Activated B cell treated with CpG ODN at 0.5 μM for 24 hours (primary cell): ENCODE measurements at regions of chr12 and their contacts with region 1.

Region 1: DNA sequence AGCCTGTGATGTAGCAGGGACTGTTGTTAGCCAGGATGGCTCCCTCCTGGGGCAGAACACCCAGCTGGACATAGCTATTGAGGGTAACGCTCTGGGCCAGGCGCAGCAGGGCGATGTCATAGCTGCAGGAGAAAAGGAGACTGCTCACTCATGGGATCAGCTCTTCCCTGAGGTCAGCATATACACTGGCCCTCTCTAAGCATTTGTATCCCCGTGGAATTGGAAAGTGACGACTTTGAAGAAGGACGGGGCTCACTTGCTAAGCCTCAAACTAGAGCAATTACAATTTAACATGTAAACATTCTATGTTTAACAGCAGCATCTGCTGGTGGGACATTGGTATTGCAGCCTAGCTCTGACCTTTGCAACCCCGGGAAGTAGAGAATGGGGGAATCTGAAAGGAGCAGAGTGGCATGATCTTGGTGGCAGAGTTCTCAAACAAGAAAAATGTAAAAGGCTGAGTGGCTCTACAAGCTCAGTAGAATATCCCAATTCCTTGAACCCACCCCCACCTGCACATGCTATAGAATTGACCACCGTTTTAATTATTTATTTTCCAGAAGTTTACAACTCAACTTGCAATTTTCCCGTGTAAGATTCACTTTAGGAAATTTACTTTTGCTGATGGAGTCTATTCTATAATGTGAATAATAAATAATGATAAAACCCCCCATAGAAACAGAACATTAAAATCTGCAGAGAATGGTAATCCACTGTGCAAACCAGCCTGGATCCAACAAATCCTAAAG is 5.0 kb downstream of the CELA1 start:
- DNase-seq: peak; percentile 30
- ATAC-seq: peak; percentile 87
- H3K4me3 Mint-ChIP-seq: peak overlapping the region; percentile 20
- H3K27ac Mint-ChIP-seq: peak overlapping the region; percentile 31
- H3K4me1 Mint-ChIP-seq: peaks cover 48% of the 10 kb centered on the region
- H3K27me3 Mint-ChIP-seq: no peaks in the 10 kb centered on the region
- CTCF ChIP-seq: peak; percentile 73

Region 2: DNA sequence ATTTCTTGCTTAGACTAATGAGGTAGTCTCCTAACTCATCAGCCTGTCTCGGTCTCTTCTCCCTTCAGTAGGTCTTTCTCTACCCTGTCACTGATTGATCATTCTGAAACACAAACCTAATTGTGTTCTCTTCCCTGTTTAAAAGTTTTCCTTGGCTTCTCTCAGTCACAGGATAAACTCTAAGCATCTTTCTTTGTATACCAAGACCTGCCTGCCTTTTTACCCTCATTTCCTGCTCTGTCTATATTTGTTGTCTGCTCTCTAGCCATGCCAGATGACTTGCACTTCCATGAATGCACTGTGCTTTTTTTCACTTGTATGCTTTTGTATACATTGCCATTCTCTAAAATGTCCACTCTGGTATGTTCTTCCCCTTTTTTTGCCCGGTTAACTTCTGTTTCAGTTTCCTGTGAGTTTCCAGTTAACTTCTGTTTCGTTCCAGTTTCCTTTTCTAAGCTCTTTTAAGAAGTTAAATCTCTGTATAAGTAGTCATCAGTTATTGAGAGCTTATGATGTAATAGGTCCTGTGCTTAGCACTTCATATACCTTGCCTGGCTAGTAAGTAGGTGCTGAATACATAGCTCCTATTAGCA is 823.9 kb before region 1 on chr12:
- CTCF ChIA-PET with region 1: no interaction called
- POLR2A ChIA-PET with region 1: no interaction called
- intact Hi-C with region 1: no loop called
- DNase-seq: no peak
- ATAC-seq: peak; percentile 75
- H3K4me3 Mint-ChIP-seq: no peak overlapping the region
- H3K27ac Mint-ChIP-seq: no peak overlapping the region
- H3K4me1 Mint-ChIP-seq: peaks cover 44% of the 10 kb centered on the region
- H3K27me3 Mint-ChIP-seq: no peaks in the 10 kb centered on the region
- CTCF ChIP-seq: no peak

Region 3: DNA sequence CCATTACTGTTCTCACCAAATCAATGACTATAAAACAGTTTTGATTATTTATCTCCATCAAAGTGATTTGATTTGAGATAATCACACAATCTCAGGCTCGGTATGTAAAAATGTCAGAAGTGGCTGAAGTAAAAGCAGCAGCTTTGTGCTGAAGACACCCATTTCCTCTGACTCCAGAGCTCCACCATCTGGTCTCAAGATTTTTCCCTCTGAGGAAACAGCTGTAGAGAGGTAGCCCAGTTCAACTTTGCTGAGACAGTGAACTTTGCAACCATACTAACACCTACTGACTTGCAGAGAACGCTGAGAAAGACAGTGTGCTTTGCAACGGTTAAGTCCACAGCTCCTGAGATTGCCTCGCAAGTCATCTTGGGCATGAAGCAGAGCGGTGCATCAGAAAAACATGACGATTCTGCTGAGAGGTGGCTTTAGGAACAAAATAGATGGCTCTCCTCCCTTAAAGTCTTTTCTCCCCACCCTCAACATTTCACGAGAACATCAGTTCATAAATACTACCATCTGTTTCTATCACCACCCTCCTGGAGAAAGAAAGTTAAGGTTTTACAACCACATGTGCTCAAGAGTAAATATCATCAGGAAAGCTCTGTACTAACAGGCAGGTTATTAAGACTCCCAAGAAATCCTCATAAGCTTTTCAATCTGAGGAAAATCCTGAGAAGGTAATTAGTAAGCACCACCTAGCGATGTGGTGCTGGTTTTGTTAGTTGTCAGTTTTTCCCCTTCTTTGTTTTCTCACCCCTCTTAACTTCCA is 354.3 kb before region 1 on chr12:
- CTCF ChIA-PET with region 1: interaction called, 17 read pairs
- POLR2A ChIA-PET with region 1: no interaction called
- intact Hi-C with region 1: loop called (anchors 5 kb)
- DNase-seq: no peak
- ATAC-seq: peak; percentile 72
- H3K4me3 Mint-ChIP-seq: no peak overlapping the region
- H3K27ac Mint-ChIP-seq: no peak overlapping the region
- H3K4me1 Mint-ChIP-seq: peaks cover 5% of the 10 kb centered on the region
- H3K27me3 Mint-ChIP-seq: no peaks in the 10 kb centered on the region
- CTCF ChIP-seq: no peak

Region 4: DNA sequence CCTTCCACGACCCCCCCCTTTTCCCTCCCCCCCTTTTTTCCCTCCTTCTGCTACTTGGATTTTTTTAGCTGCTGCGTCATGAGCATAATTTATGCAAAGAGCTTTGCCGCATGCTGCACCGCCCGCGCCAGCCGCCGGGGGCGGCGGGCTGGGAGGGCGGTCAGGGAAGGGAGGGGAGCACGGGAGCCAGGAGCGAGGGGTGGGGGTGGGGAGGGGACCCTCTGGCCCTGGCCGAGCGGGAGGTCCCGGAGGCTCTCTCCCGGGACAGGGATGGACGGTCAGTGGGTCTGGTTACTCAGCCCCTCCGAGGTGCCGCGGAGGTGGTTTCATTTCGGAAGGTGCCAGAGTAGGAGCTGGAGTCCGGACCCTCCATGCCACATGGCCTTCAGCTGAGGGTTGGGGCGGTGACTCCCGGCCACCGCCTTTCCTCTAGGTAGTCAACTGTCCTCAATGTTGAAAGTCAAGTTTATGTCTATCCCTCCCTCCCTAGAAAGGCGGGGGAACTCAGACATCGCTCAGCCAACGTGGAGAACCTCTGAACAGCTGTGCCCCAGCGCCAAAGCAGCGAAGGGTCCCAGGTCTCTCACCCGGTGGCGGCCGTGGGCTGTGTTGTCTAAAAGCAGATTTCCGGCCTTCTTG is 123.3 kb before region 1 on chr12 and contains the start of gene POU6F1:
- CTCF ChIA-PET with region 1: interaction called, 7 read pairs
- POLR2A ChIA-PET with region 1: interaction called, 9 read pairs
- intact Hi-C with region 1: loop called (anchors 1 kb)
- DNase-seq: peak; percentile 68
- ATAC-seq: peak; percentile 79
- H3K4me3 Mint-ChIP-seq: peak within 1 kb of the TSS; percentile 91
- H3K27ac Mint-ChIP-seq: peak within 1 kb of the TSS; percentile 95
- H3K4me1 Mint-ChIP-seq: peaks cover 17% of the 10 kb centered on the region
- H3K27me3 Mint-ChIP-seq: no peaks in the 10 kb centered on the region
- CTCF ChIP-seq: no peak
- total RNA-seq, gene POU6F1: 20.3 and 26.2 TPM in 2 replicates

Region 5: GRCh38 chr12:51270067-51270970 is 71.1 kb before region 1 on chr12 and contains the start of gene SMAGP:
- CTCF ChIA-PET with region 1: interaction called, 53 read pairs
- POLR2A ChIA-PET with region 1: interaction called, 26 read pairs
- intact Hi-C with region 1: loop called (anchors 1 kb)
- DNase-seq: peak; percentile 69
- ATAC-seq: peak; percentile 73
- H3K4me3 Mint-ChIP-seq: peak within 1 kb of the TSS; percentile 89
- H3K27ac Mint-ChIP-seq: peak within 1 kb of the TSS; percentile 80
- H3K4me1 Mint-ChIP-seq: peaks cover 26% of the 10 kb centered on the region
- H3K27me3 Mint-ChIP-seq: no peaks in the 10 kb centered on the region
- CTCF ChIP-seq: no peak
- total RNA-seq, gene SMAGP: 11.4 and 11.5 TPM in 2 replicates

Region 6: DNA sequence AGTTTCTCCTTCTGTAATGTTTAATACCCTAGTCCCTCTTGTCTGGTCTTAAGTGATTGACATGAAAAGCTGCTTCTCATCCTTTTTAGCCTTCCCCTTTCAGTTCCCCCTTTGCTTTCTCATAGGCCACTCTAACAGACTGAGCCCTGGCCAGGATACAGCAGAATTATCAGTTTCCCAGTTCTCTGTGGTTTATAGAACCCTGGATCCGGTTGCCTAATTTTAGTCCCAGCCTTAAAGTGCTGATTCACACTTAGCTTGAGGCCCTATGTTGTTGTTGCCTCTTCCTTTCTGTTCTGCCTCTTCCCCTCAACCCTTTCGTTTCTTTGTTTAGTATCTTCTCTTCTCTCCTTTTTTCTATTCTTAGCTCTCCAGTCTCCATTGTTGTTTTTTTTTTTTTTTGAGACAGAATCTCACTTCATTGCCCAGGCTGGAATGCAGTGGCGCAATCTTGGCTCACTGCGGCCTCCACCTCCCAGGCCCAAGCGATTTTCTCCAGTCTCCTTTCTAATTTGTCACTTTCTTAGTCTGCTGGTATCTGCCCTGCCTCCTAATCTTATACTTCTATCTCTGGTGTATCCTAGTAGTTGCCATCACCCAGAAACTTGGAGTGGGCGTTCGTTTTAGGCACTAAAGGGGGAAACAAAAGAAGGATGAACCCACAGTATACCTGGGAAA is 14.5 kb before region 1 on chr12:
- CTCF ChIA-PET with region 1: interaction called, 42 read pairs
- POLR2A ChIA-PET with region 1: interaction called, 13 read pairs
- intact Hi-C with region 1: loop called (anchors 1 kb)
- DNase-seq: no peak
- ATAC-seq: peak; percentile 41
- H3K4me3 Mint-ChIP-seq: peak overlapping the region; percentile 62
- H3K27ac Mint-ChIP-seq: peak overlapping the region; percentile 72
- H3K4me1 Mint-ChIP-seq: peaks cover 81% of the 10 kb centered on the region
- H3K27me3 Mint-ChIP-seq: no peaks in the 10 kb centered on the region
- CTCF ChIP-seq: no peak

Region 7: GRCh38 chr12:51368640-51369517 is 27.4 kb after region 1 on chr12:
- CTCF ChIA-PET with region 1: interaction called, 5 read pairs
- POLR2A ChIA-PET with region 1: no interaction called
- intact Hi-C with region 1: loop called (anchors 1 kb)
- DNase-seq: peak; percentile 81
- ATAC-seq: peak; percentile 95
- H3K4me3 Mint-ChIP-seq: peak overlapping the region; percentile 80
- H3K27ac Mint-ChIP-seq: peak overlapping the region; percentile 90
- H3K4me1 Mint-ChIP-seq: peaks cover 65% of the 10 kb centered on the region
- H3K27me3 Mint-ChIP-seq: no peaks in the 10 kb centered on the region
- CTCF ChIP-seq: no peak